CD8-positive, alpha-beta T cell (primary cell): ENCODE measurements at regions of chr11 and their contacts with region 1.

Region 1: GRCh38 chr11:11787305-11788062 is 54.3 kb upstream of the USP47 start:
- DNase-seq: peak; percentile 33 to 79 (median 71)
- ATAC-seq: peak; percentile 82
- H3K4me3 ChIP-seq: no peak overlapping the region
- H3K4me3 Mint-ChIP-seq: no peak overlapping the region
- H3K27ac ChIP-seq: no peak overlapping the region
- H3K27ac Mint-ChIP-seq: no peak overlapping the region
- H3K4me1 ChIP-seq: no peaks in the 10 kb centered on the region
- H3K4me1 Mint-ChIP-seq: no peaks in the 10 kb centered on the region
- H3K27me3 ChIP-seq: no peaks in the 10 kb centered on the region
- H3K27me3 Mint-ChIP-seq: peaks cover 7% of the 10 kb centered on the region
- CTCF ChIP-seq: peak; percentile 83

Region 2: DNA sequence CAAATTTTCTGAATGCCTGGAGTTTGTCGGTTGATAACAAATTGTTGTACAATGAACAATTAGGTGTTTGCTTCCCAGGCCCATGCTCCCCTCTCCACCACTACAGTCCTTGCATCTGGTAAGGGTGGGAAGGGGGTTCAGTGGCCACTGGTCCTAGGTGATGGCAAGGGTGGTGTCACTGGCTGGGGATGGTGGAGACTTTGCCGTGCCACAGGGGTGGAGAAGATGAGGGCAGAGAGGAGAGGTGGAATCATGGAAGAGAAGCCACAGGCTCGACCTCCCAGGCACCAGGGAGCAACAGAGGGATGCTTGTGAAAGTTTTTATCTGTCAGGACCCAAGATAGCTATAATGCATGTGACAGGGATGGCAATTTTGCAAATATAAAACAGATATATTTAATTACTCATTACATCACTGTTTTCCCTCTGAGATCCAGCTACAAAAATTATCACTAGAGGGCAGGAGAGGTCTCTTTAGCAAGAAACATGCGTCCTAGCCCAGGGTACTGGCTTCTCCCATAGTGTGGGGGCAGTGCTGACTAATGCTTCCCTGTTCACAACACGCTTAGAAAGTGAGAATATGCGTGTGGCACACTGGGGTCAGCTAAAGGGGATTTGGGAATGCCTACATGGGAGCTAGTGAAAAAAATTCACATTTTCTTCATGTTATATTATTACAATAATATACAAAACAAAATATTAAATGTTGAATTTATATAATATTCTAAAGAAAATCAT is 1381.5 kb before region 1 on chr11:
- CTCF ChIA-PET with region 1: no interaction called
- POLR2A ChIA-PET with region 1: no interaction called
- intact Hi-C with region 1: loop called in 1 of 2 experiments (anchors 10 kb)
- DNase-seq: peak in 7 of 9 experiments; percentile 16 to 75 (median 43)
- ATAC-seq: peak; percentile 73
- H3K4me3 ChIP-seq: no peak overlapping the region
- H3K4me3 Mint-ChIP-seq: no peak overlapping the region
- H3K27ac ChIP-seq: no peak overlapping the region
- H3K27ac Mint-ChIP-seq: no peak overlapping the region
- H3K4me1 ChIP-seq: peaks cover 9% of the 10 kb centered on the region
- H3K4me1 Mint-ChIP-seq: peaks cover 13% of the 10 kb centered on the region
- H3K27me3 ChIP-seq: no peaks in the 10 kb centered on the region
- H3K27me3 Mint-ChIP-seq: no peaks in the 10 kb centered on the region
- CTCF ChIP-seq: peak; percentile 66

Region 3: GRCh38 chr11:10792398-10792975 is 995.0 kb before region 1 on chr11:
- CTCF ChIA-PET with region 1: interaction called, 32 read pairs
- POLR2A ChIA-PET with region 1: no interaction called
- intact Hi-C with region 1: loop called in 1 of 2 experiments (anchors 1 kb)
- DNase-seq: peak; percentile 65 to 91 (median 85)
- ATAC-seq: peak; percentile 88
- H3K4me3 ChIP-seq: no peak overlapping the region
- H3K4me3 Mint-ChIP-seq: no peak overlapping the region
- H3K27ac ChIP-seq: no peak overlapping the region
- H3K27ac Mint-ChIP-seq: no peak overlapping the region
- H3K4me1 ChIP-seq: peaks cover 24% of the 10 kb centered on the region
- H3K4me1 Mint-ChIP-seq: peaks cover 31% of the 10 kb centered on the region
- H3K27me3 ChIP-seq: peaks cover 0 to 5% of the 10 kb centered on the region in 2 experiments
- H3K27me3 Mint-ChIP-seq: peaks cover 3% of the 10 kb centered on the region
- CTCF ChIP-seq: peak; percentile 90

Region 4: DNA sequence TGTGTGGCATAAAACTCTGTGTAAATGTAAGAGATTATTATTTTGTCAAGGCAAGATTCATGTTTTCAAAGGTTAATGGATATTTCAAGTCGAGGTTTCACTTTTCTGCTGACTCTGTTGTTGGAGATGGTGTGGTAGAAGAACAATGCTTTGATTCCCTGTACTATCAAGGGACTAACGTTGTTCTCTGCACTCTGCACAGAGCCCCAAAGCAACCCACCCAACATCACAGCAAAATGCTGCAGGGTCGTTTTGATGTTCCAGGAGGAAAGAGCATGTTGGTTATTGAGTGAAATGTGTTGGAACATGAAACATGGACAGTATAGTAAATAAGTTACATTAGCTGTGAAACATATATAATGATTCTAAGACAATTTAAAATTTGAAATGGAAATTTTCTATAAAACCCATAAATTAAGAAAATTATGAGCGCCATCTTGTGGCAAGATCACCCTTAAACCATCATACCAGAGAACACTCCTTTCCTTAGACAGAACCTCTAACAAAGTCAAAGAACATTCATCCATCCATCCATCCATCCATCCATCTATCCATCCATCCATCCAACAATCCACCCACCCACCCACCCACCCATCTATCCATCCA is 765.3 kb before region 1 on chr11:
- CTCF ChIA-PET with region 1: interaction called, 67 read pairs
- POLR2A ChIA-PET with region 1: no interaction called
- intact Hi-C with region 1: no loop called
- DNase-seq: peak in 3 of 9 experiments; percentile 27 to 54 (median 48)
- ATAC-seq: no peak
- H3K4me3 ChIP-seq: no peak overlapping the region
- H3K4me3 Mint-ChIP-seq: no peak overlapping the region
- H3K27ac ChIP-seq: no peak overlapping the region
- H3K27ac Mint-ChIP-seq: no peak overlapping the region
- H3K4me1 ChIP-seq: no peaks in the 10 kb centered on the region
- H3K4me1 Mint-ChIP-seq: no peaks in the 10 kb centered on the region
- H3K27me3 ChIP-seq: no peaks in the 10 kb centered on the region
- H3K27me3 Mint-ChIP-seq: peaks cover 4% of the 10 kb centered on the region
- CTCF ChIP-seq: peak; percentile 63

Region 5: GRCh38 chr11:11157185-11157584 is 630.3 kb before region 1 on chr11:
- CTCF ChIA-PET with region 1: interaction called, 19 read pairs
- POLR2A ChIA-PET with region 1: no interaction called
- intact Hi-C with region 1: loop called (anchors 1 to 5 kb)
- DNase-seq: peak; percentile 37 to 78 (median 70)
- ATAC-seq: peak; percentile 74
- H3K4me3 ChIP-seq: no peak overlapping the region
- H3K4me3 Mint-ChIP-seq: no peak overlapping the region
- H3K27ac ChIP-seq: no peak overlapping the region
- H3K27ac Mint-ChIP-seq: peak overlapping the region; percentile 94
- H3K4me1 ChIP-seq: peaks cover 23% of the 10 kb centered on the region
- H3K4me1 Mint-ChIP-seq: peaks cover 22% of the 10 kb centered on the region
- H3K27me3 ChIP-seq: no peaks in the 10 kb centered on the region
- H3K27me3 Mint-ChIP-seq: no peaks in the 10 kb centered on the region
- CTCF ChIP-seq: peak; percentile 61

Region 6: GRCh38 chr11:11909727-11910126 is 122.2 kb after region 1 on chr11:
- CTCF ChIA-PET with region 1: no interaction called
- POLR2A ChIA-PET with region 1: no interaction called
- intact Hi-C with region 1: no loop called
- DNase-seq: no peak
- ATAC-seq: no peak
- H3K4me3 ChIP-seq: no peak overlapping the region
- H3K4me3 Mint-ChIP-seq: no peak overlapping the region
- H3K27ac ChIP-seq: no peak overlapping the region
- H3K27ac Mint-ChIP-seq: no peak overlapping the region
- H3K4me1 ChIP-seq: no peaks in the 10 kb centered on the region
- H3K4me1 Mint-ChIP-seq: no peaks in the 10 kb centered on the region
- H3K27me3 ChIP-seq: no peaks in the 10 kb centered on the region
- H3K27me3 Mint-ChIP-seq: no peaks in the 10 kb centered on the region
- CTCF ChIP-seq: no peak